Panc1 (cell line): ENCODE measurements at regions of chr20 and their contacts with region 1.

Region 1: GRCh38 chr20:6081236-6081635 is 27.4 kb upstream of the LRRN4 start:
- DNase-seq: no peak
- ATAC-seq: no peak
- H3K4me3 ChIP-seq: no peak overlapping the region
- H3K27ac ChIP-seq: no peak overlapping the region
- H3K4me1 ChIP-seq: no peaks in the 10 kb centered on the region
- H3K27me3 ChIP-seq: peaks cover 3% of the 10 kb centered on the region; the same call in 1 of the 2 replicates
- CTCF ChIP-seq: no peak

Region 2: GRCh38 chr20:5918856-5919625 is 162.2 kb before region 1 on chr20:
- CTCF ChIA-PET with region 1: no interaction called
- POLR2A ChIA-PET with region 1: no interaction called
- in situ Hi-C with region 1: no loop called
- intact Hi-C with region 1: no loop called
- DNase-seq: peak; percentile 46
- ATAC-seq: peak; percentile 92
- H3K4me3 ChIP-seq: 0 out of 4 replicates have a peak overlapping the region, but pooled peaks of 1 of the 2 experiments have one; percentile 8
- H3K27ac ChIP-seq: 0 out of 2 replicates have a peak overlapping the region, but pooled peaks have one; percentile 25
- H3K4me1 ChIP-seq: peaks cover 12% of the 10 kb centered on the region
- H3K27me3 ChIP-seq: no peaks in the 10 kb centered on the region
- CTCF ChIP-seq: no peak

Region 3: DNA sequence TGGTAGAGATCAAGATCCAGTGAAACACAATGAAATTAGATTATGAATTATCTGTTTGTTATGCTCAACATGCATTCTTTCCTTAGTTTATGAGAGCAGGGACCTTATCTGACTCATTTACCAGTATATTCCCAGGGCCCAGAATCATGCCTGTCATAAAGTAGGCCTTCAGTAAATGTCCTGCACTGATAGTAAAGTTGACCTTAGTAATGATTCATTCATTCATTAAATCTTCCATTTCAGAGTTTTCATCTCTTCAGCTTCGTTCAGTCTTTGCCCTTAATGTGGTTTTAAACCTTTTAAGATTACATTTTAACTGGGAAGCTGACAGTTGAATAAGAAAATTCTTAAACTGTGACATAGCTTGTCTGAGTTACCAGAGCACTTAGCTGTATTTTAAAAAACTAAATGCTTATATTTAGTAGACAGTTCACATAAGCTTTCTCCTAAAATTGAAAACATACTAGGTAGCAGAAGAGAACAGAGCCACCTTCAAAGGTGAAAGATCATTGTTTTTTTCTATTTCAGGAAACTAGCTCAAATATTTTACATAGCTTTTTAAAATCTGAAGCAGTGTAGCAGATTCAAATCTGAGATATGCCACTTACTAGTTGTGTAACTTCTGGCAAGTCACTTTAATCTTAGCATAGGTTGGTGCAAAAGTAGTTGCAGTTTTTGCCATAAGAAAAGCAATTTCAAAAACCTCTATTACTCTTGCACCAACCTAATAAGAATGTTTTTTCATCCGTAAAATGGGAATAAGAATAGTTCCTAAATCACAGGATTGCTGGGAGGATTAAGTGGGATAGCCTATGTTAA is 89.4 kb before region 1 on chr20:
- CTCF ChIA-PET with region 1: no interaction called
- POLR2A ChIA-PET with region 1: no interaction called
- in situ Hi-C with region 1: no loop called
- intact Hi-C with region 1: no loop called
- DNase-seq: no peak
- ATAC-seq: no peak
- H3K4me3 ChIP-seq: no peak overlapping the region
- H3K27ac ChIP-seq: no peak overlapping the region
- H3K4me1 ChIP-seq: no peaks in the 10 kb centered on the region
- H3K27me3 ChIP-seq: no peaks in the 10 kb centered on the region
- CTCF ChIP-seq: no peak

Region 4: DNA sequence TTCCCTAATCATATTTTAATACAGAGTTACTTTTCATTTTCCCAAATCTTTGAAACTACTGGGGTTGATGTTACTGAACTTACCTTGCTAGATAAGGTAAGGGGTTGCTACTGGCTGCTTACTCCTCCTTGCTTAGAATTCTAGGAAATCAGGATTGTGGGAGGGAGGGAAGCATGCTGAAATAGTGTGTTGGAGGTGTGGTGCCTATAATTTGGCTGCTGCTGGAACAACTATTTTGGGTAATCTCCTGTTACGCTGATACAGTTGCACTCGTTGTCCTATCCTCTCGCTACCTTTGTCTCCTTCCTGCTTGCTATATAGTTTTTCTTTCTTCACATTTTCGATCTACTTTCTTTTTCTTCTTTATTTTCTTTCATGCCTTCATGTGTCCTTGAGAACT is 769.9 kb after region 1 on chr20:
- CTCF ChIA-PET with region 1: no interaction called
- POLR2A ChIA-PET with region 1: no interaction called
- in situ Hi-C with region 1: no loop called
- intact Hi-C with region 1: loop called (anchors 5 kb)
- DNase-seq: no peak
- ATAC-seq: no peak
- H3K4me3 ChIP-seq: no peak overlapping the region
- H3K27ac ChIP-seq: no peak overlapping the region
- H3K4me1 ChIP-seq: no peaks in the 10 kb centered on the region
- H3K27me3 ChIP-seq: no peaks in the 10 kb centered on the region
- CTCF ChIP-seq: no peak